Dendritic cell treated with granulocyte-macrophage colony-stimulating factor and Interleukin-4, amounts not matched to agents 40 ng/mL and 50 ng/mL, for 4 days (primary cell): ENCODE measurements at regions of chr2 and their contacts with region 1.

Region 1: DNA sequence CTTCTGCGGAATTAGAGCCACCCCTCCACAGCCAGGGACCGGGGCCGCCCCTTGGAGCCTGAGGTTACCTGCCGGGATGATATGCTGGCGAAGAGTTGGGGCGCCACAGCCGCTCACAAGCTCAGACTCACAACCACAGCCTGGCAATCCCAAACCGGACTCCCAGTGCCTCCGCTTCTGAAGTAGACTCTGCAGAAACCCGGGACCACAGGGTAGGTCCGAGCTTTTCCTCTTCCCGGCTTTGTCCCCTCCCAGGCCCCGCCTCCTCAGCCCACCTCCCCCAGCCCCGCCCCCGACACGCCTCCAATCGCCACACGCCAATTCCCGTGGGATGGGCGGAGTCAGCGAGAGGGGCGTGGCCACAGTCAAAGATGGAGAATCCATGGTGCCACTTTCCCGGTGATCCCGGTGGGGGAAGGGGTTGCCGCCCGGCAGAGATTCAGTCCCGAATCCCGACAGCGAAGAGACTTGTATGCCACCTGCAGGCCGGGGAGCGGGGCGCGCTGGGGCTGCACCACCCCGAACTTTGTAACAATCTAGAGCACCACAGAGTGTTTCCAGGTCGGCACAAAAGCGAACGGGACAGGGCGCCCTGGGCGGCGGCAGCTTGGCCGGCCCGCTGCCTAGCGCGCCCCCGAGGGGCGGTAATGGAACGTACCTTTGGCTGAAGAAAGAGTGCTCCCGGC is at the start of gene IDH1:
- H3K4me3 Mint-ChIP-seq: peak within 1 kb of the TSS; percentile 96
- H3K27ac Mint-ChIP-seq: peak within 1 kb of the TSS; percentile 86
- H3K4me1 Mint-ChIP-seq: peaks cover 39% of the 10 kb centered on the region
- H3K27me3 Mint-ChIP-seq: no peaks in the 10 kb centered on the region

Region 2: DNA sequence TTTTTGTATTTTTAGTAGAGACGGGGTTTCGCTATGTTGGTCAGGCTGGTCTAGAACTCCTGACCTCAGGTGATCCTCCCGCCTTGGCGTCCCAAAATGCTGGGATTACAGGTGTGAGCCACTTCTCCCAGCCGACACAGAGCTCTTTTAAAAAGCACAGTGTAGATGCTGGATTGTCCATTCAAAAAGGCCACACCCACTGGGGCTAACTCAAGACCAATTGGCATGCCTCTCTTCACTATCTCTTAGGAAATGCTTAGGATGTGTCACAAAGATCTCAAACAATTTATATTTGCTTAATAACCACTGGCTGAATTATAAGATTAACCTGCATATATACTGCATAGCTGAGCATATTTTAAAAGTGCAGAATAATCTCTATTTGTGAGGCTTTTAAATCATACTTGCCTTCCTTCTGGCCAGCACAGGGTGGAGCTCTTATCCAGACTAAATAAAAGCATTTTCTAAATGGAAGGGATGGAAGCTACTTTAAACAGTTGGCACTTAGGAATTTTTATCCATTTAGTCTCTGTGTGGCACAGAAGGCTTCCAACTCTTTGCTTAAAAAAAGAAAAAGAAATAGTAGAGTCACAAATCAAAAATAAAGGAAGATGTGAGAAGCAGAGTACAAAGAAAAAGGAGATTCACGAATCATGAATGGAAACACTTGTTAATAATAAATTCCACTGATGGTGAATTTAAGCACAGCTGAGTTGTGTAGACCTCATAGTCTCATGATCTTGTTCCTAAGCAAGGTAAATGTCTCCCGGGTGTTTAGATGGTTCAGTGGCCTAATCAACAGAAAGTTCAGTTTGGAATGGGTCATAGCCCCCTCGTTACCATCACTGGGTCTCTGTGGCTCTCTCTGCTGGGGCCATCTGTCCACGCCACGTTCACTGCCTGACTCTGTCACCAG is 153.0 kb before region 1 on chr2:
- intact Hi-C with region 1: loop called (anchors 2 kb)
- H3K4me3 Mint-ChIP-seq: peak overlapping the region; percentile 20
- H3K27ac Mint-ChIP-seq: no peak overlapping the region
- H3K4me1 Mint-ChIP-seq: peaks cover 30% of the 10 kb centered on the region
- H3K27me3 Mint-ChIP-seq: peaks cover 2% of the 10 kb centered on the region

Region 3: GRCh38 chr2:208175069-208175839 is 79.8 kb before region 1 on chr2:
- intact Hi-C with region 1: loop called (anchors 1 kb)
- H3K4me3 Mint-ChIP-seq: no peak overlapping the region
- H3K27ac Mint-ChIP-seq: peak overlapping the region; percentile 73
- H3K4me1 Mint-ChIP-seq: peaks cover 42% of the 10 kb centered on the region
- H3K27me3 Mint-ChIP-seq: no peaks in the 10 kb centered on the region

Region 4: DNA sequence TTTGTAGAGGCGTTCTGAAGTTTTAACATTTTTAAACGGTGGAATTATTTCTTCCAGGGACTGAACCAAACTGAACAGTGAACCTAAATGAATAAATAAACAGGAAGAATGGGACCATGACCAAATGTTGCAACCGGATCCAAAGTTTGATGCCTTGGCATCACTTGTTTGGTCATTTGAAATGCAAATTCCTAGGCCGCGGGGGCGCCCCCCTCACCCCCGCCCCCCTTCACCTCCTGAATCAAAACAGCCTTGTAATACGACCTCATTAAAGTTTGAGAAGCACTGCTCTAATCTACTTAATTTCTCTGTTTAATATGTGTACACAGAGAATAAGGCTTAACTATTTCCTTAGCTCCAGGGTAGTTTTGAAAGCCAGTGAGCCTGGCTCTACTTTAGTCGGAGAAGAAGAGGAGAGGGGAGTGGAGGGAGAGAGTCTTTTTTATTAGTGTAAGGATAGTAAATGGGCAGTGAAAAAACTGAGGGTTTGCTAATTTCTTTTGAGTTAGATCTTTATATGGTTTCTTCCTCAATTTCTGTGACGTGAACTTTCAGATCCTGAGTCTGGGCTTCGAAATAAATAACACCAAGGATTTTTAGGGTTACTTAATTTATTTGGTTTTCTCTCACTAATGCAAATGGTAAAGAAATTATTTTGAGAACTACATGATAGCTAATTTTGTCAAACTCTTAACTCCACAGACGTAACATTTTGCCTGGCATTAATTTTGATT is 70.9 kb before region 1 on chr2:
- intact Hi-C with region 1: loop called (anchors 2 kb)
- H3K4me3 Mint-ChIP-seq: peak overlapping the region; percentile 6
- H3K27ac Mint-ChIP-seq: peak overlapping the region; percentile 86
- H3K4me1 Mint-ChIP-seq: peaks cover 28% of the 10 kb centered on the region
- H3K27me3 Mint-ChIP-seq: no peaks in the 10 kb centered on the region

Region 5: DNA sequence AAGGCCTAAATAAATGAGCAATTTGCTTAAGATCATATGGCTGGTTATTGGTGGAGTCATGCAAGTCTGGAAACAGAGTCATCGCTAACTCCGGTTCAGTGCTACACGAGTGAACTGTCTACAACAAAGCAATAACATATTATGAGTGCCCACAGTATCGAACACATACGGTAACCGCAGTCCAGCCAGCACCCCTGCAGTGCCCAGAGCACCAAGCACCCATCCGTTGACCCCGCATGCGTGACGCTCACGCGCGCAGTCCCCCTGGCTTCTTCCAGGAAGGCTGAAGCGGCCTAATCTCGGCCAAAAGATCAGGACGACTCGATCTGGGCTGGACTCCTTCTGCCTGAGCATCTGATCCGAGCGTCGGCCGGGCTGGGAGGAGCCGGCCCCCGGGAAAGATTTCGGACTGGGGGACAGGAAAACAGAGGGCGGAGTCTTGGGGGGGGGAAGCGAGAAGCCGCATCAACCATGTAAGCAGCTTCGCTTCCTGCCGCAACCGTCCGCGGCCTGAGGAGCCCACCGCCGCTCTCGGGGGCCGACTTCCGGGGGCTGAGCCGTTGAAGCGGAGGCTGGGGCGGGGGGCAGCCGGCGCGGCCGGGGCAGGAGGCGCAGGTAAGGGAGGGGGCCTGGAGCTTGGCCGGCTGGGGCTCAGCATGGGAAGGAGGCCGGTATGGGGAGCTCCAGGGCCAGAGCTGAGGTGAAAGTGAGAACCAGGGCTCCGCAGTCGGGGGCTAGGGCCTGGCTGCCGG is 11.0 kb after region 1 on chr2 and contains the start of gene PIKFYVE:
- intact Hi-C with region 1: loop called (anchors 1 kb)
- H3K4me3 Mint-ChIP-seq: peak within 1 kb of the TSS; percentile 91
- H3K27ac Mint-ChIP-seq: peak within 1 kb of the TSS; percentile 94
- H3K4me1 Mint-ChIP-seq: peaks cover 43% of the 10 kb centered on the region
- H3K27me3 Mint-ChIP-seq: no peaks in the 10 kb centered on the region

Region 6: GRCh38 chr2:208373460-208374089 is 118.6 kb after region 1 on chr2:
- intact Hi-C with region 1: no loop called
- H3K4me3 Mint-ChIP-seq: no peak overlapping the region
- H3K27ac Mint-ChIP-seq: no peak overlapping the region
- H3K4me1 Mint-ChIP-seq: no peaks in the 10 kb centered on the region
- H3K27me3 Mint-ChIP-seq: no peaks in the 10 kb centered on the region